MCF 10A (cell line): ENCODE measurements at regions of chr17 and their contacts with region 1.

Region 1: GRCh38 chr17:78736526-78737079 is 45.5 kb downstream of the CYTH1 start:
- DNase-seq: peak; percentile 88
- H3K4me3 Mint-ChIP-seq: peak overlapping the region; percentile 84
- H3K27ac Mint-ChIP-seq: peak overlapping the region; percentile 87
- H3K4me1 Mint-ChIP-seq: peaks cover 36% of the 10 kb centered on the region
- H3K27me3 Mint-ChIP-seq: no peaks in the 10 kb centered on the region
- CTCF ChIP-seq: peak; percentile 14

Region 2: GRCh38 chr17:78661093-78661770 is 75.4 kb before region 1 on chr17:
- CTCF ChIA-PET with region 1: no interaction called
- POLR2A ChIA-PET with region 1: no interaction called
- intact Hi-C with region 1: no loop called
- DNase-seq: peak; percentile 77
- H3K4me3 Mint-ChIP-seq: peak overlapping the region; percentile 28
- H3K27ac Mint-ChIP-seq: no peak overlapping the region
- H3K4me1 Mint-ChIP-seq: peaks cover 20% of the 10 kb centered on the region
- H3K27me3 Mint-ChIP-seq: no peaks in the 10 kb centered on the region
- CTCF ChIP-seq: no peak

Region 3: GRCh38 chr17:78692460-78693010 is 44.1 kb before region 1 on chr17:
- CTCF ChIA-PET with region 1: no interaction called
- POLR2A ChIA-PET with region 1: no interaction called
- intact Hi-C with region 1: no loop called
- DNase-seq: no peak
- H3K4me3 Mint-ChIP-seq: no peak overlapping the region
- H3K27ac Mint-ChIP-seq: peak overlapping the region; percentile 29
- H3K4me1 Mint-ChIP-seq: peaks cover 4% of the 10 kb centered on the region
- H3K27me3 Mint-ChIP-seq: no peaks in the 10 kb centered on the region
- CTCF ChIP-seq: no peak

Region 4: GRCh38 chr17:78716814-78717393 is 19.7 kb before region 1 on chr17:
- CTCF ChIA-PET with region 1: interaction called, 16 read pairs
- POLR2A ChIA-PET with region 1: interaction called, 131 read pairs
- intact Hi-C with region 1: no loop called
- DNase-seq: peak; percentile 76
- H3K4me3 Mint-ChIP-seq: peak overlapping the region; percentile 74
- H3K27ac Mint-ChIP-seq: peak overlapping the region; percentile 70
- H3K4me1 Mint-ChIP-seq: peaks cover 55% of the 10 kb centered on the region
- H3K27me3 Mint-ChIP-seq: no peaks in the 10 kb centered on the region
- CTCF ChIP-seq: no peak

Region 5: GRCh38 chr17:78723001-78723796 is 13.4 kb before region 1 on chr17:
- CTCF ChIA-PET with region 1: interaction called, 16 read pairs
- POLR2A ChIA-PET with region 1: interaction called, 131 read pairs
- intact Hi-C with region 1: no loop called
- DNase-seq: no peak
- H3K4me3 Mint-ChIP-seq: no peak overlapping the region
- H3K27ac Mint-ChIP-seq: no peak overlapping the region
- H3K4me1 Mint-ChIP-seq: peaks cover 36% of the 10 kb centered on the region
- H3K27me3 Mint-ChIP-seq: no peaks in the 10 kb centered on the region
- CTCF ChIP-seq: no peak

Region 6: DNA sequence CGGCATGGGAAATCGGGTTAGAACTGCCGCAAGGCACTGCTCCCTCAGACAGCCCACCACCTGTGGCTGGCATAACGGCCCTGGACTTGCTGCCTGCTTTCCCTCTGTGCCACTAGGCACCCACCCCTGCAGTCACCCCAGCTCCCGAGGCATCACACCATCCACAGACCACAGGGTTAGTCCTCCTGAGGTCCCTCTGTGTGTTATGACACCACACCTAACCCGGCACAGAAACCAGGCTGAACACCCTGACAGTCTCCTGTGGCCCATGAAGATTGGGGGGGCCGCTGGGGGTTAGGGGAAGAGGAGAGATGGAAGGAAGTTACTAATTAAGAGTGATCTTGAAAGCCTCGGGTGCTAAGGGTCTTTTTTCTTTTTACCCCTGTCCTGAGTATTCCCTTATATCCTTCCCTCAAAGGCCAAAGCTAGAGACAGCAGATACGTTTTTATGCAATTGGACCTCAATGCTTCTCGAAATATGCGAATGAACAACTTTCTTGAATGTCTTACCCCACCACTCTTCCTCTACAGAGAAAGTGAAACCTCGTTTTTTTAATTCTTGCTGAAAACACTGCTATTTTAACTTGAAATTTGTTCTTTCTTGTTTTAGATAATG is 38.5 kb after region 1 on chr17:
- CTCF ChIA-PET with region 1: interaction called, 5 read pairs
- POLR2A ChIA-PET with region 1: interaction called, 16 read pairs
- intact Hi-C with region 1: no loop called
- DNase-seq: peak; percentile 41
- H3K4me3 Mint-ChIP-seq: peak overlapping the region; percentile 68
- H3K27ac Mint-ChIP-seq: peak overlapping the region; percentile 81
- H3K4me1 Mint-ChIP-seq: peaks cover 21% of the 10 kb centered on the region
- H3K27me3 Mint-ChIP-seq: no peaks in the 10 kb centered on the region
- CTCF ChIP-seq: no peak

Region 7: DNA sequence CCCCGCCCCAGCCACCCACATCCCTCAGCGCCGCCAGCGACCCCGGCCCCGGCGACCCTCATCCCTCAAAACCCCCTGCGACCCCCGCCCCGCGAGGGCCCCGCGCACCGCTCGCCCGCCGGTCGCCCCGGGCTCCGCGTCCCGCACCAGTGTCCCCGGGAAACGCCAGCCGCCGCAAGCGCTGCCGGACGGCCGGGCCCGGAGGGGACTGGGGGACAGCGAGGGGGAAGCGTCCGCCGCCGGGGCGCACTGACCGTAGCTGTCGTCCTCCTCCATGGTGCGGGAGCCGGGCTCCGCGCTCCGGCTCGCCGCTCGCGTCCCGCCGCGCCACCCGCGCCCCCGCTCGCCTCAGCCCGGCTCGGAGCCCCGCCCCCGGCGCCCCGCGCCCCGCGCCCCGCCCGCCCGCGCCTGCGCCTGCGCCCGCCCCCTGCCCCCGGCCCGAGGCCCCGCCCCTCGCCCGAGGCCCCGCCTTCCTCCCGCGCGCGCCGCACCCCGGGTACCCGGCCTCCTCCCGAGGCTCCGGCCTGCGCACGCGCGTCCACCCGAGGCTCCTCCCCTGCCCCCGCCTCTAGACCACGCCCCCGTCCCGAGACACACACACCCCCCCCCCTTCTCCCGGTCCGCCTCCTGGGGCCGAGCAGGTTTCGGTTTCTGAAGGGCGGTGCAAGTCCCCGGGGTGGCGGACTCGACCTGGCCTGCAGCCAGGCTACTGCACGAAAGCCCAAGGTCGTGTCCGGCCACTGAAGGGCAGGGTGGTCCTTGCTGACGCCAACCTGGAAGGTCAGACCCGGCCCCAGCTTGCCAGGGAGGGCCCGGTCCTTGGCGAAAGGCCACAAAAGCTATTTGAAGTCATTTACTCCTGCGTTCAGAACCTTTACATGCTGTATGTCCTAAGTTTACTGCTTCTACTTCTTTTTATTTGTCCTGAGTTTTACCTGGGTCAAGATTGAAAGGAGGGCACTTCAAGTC is 45.6 kb after region 1 on chr17 and contains the start of gene CYTH1:
- CTCF ChIA-PET with region 1: interaction called, 5 read pairs
- POLR2A ChIA-PET with region 1: interaction called, 16 read pairs
- intact Hi-C with region 1: no loop called
- DNase-seq: peak; percentile 92
- H3K4me3 Mint-ChIP-seq: peak within 1 kb of the TSS; percentile 79
- H3K27ac Mint-ChIP-seq: peak within 1 kb of the TSS; percentile 87
- H3K4me1 Mint-ChIP-seq: peaks cover 13% of the 10 kb centered on the region
- H3K27me3 Mint-ChIP-seq: no peaks in the 10 kb centered on the region
- CTCF ChIP-seq: no peak
- total RNA-seq, gene CYTH1: 32.8 and 38.5 TPM in 2 replicates

Region 8: GRCh38 chr17:78817123-78817522 is 80.5 kb after region 1 on chr17:
- CTCF ChIA-PET with region 1: no interaction called
- POLR2A ChIA-PET with region 1: no interaction called
- intact Hi-C with region 1: no loop called
- DNase-seq: no peak
- H3K4me3 Mint-ChIP-seq: no peak overlapping the region
- H3K27ac Mint-ChIP-seq: no peak overlapping the region
- H3K4me1 Mint-ChIP-seq: no peaks in the 10 kb centered on the region
- H3K27me3 Mint-ChIP-seq: no peaks in the 10 kb centered on the region
- CTCF ChIP-seq: no peak